Posterior vena cava (tissue), 2 donors: ENCODE measurements at regions of chr6 and their contacts with region 1.

Region 1: GRCh38 chr6:166877906-166878305 is 78.4 kb downstream of the RNASET2 start:
- DNase-seq: no peak

Region 2: DNA sequence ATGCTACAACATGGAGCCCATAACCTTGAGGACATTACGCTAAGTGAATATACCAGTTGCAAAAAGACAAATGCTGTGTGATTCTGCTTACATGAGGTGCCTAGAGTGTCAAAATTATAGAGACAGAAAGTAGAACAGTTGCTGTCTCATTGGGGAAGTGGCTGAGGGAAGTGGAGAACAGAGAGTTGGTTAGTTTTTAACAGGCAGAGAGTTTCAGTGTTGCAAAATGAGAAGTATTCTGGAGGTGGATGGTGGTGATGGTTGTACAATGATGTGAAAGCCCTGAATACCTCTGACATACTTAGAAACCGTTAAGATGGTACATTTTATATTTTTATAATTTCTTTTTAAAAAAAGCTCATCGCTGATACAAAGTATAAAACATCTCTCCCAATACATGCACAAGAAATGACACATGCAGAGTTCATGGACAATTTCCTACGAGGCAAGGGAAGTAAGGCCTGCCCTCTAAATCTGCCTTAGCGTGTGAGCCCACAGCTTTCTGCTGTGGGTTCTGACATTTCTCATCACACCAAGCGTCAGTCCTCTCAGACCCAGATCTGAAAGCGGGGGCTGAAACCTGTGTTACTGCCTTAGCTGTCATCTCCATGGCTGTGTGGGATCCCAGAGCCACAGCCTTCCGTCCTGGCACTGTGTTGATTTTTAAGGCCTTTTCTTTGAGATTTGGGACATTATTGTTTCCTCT is 47.6 kb before region 1 on chr6:
- intact Hi-C with region 1: loop called in 1 of 2 experiments (anchors 1 kb)
- DNase-seq: no peak

Region 3: GRCh38 chr6:166853371-166854325 is 24.3 kb before region 1 on chr6:
- intact Hi-C with region 1: loop called in 1 of 2 experiments (anchors 2 kb)
- DNase-seq: no peak